ENCODE measurements at regions of chr6 and their contacts with region 1.

Region 1: GRCh38 chr6:157379656-157380454 is 1.1 kb upstream of the ZDHHC14 start:
- DNase-seq: peak; percentile 85
- ATAC-seq: peak; percentile 73
- H3K4me3 ChIP-seq: peak overlapping the region; percentile 96
- H3K27ac ChIP-seq: no peak overlapping the region
- H3K4me1 ChIP-seq: peaks cover 11% of the 10 kb centered on the region; the same call in 1 of the 2 replicates
- H3K27me3 ChIP-seq: no peaks in the 10 kb centered on the region
- CTCF ChIP-seq: no peak

Region 2: GRCh38 chr6:157089258-157089657 is 290.6 kb before region 1 on chr6:
- CTCF ChIA-PET with region 1: no interaction called
- POLR2A ChIA-PET with region 1: no interaction called
- intact Hi-C with region 1: no loop called
- DNase-seq: no peak
- ATAC-seq: no peak
- H3K4me3 ChIP-seq: no peak overlapping the region
- H3K27ac ChIP-seq: no peak overlapping the region
- H3K4me1 ChIP-seq: no peaks in the 10 kb centered on the region
- H3K27me3 ChIP-seq: no peaks in the 10 kb centered on the region
- CTCF ChIP-seq: no peak

Region 3: DNA sequence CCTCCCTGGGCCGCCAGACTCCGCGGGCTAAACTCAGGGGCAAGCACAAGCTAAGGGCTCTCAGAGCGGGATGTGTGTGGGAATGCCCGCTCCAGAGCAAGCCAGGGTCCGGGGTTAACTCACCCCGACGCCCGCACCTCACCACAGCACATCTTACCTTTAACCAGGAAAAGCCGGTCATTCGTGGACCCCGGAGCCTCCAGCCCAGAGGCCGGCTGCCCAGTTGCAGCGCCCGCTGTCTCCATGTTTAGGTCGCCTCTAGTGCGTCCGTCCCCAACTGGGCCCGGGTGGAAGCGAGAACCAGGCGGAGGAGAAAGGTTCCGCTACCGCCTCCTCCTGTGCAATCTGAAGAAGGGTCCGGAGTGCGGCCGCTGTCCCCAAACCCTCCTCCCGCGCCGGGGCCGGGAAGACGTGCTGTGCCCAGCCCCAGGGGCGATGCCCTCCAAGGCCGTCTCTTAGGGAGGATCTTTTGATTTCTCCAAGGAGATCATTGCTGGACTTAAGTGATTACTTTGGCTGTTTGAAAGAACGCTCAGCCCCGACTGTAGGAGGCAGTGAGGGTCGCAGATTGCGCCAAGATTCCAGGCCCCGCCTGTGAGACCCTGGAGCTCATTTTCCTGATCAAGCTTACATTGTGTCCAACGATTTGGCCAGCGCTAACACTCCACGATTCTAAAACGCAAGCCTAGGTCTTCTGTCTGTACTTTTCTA is 56.4 kb before region 1 on chr6 and contains the start of gene TMEM242:
- CTCF ChIA-PET with region 1: no interaction called
- POLR2A ChIA-PET with region 1: no interaction called
- intact Hi-C with region 1: loop called (anchors 2 kb)
- DNase-seq: peak; percentile 91
- ATAC-seq: peak; percentile 79
- H3K4me3 ChIP-seq: peak within 1 kb of the TSS; percentile 85
- H3K27ac ChIP-seq: peak within 1 kb of the TSS; percentile 56
- H3K4me1 ChIP-seq: peaks cover 12% of the 10 kb centered on the region
- H3K27me3 ChIP-seq: no peaks in the 10 kb centered on the region
- CTCF ChIP-seq: no peak
- total RNA-seq, gene TMEM242: 7.9 and 10.3 TPM in 2 replicates

Region 4: DNA sequence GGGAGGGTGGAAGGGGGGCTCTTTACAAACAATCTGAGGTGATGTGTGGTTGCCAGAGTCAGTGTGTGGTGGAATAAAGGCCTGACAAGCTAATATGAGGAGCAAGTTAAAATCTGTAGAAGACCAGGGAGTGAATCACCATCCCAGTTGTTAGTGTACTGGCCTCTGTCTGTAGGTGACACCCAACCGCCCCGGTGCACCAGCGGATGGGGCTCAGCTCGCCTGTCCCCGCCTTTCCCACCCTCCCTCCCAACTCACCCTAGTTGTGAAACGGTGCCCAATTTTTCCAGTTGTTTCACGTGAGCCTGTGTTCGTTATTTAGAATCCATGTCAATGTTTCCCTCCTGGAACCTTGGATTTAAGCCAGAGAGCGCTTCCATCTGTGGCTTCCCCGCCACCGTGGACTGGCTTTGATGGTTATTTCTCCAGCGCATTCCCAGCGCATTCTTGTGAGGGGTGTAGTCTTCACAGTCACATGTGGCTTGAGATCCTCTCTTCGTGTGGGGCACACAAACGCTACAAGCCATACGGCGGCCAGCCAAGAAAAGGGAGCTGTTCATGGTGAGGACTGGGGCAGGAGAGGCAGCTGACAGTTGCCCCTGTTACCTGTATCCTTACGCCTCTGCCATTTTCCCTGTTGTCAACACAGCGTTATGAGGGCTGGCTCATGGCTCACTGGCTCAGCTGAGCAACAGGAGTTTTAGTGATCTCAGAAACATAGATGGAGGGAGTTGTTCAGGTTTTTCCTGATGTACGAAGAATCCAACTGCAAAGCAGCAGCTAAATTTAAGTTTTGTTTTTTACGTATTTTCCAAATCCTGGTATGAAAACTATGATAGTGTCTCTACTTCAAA is 138.8 kb after region 1 on chr6:
- CTCF ChIA-PET with region 1: no interaction called
- POLR2A ChIA-PET with region 1: no interaction called
- intact Hi-C with region 1: no loop called
- DNase-seq: no peak
- ATAC-seq: no peak
- H3K4me3 ChIP-seq: no peak overlapping the region
- H3K27ac ChIP-seq: no peak overlapping the region
- H3K4me1 ChIP-seq: peaks cover 8% of the 10 kb centered on the region
- H3K27me3 ChIP-seq: no peaks in the 10 kb centered on the region
- CTCF ChIP-seq: no peak

Region 5: DNA sequence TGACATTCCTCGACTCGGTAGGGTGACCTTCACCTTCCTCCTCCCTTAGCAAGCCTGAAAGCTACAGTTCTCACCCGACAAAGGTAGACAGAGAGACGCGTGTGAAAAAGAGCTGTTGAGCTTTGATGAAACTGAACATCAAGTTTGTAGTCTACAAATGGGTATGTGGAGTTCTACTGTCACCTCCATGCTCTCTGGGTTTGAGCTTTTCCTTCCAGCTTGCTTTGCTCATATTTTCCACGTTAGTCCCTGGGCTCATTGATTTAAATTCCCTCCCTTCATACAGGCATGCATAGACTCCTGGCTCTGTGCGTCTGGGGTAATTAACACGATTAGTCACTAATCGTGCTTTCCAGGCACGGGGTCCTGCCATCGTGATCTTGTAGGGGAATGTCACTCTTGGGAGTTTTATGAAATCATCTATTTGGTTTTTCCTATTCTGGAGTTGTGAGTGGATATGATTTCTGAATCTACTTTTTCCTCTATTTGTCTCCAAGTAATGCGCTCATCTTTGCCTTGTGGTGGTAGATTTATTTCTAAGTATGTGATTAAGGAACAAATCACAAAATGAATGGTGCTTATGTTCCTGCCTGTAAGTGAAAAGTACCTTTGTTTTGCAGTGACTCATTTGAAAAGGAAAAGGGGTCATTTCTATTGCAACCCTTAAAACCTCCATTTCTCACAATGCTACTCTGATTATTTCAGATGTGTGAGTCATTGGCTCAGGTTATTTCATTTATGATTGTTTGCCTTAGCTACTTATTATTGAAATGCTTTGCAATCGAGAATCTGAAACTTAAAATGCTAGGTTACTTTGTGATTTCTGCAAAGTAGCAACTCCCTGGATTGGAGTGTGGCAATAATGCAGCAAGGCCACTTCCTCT is 155.7 kb after region 1 on chr6:
- CTCF ChIA-PET with region 1: no interaction called
- POLR2A ChIA-PET with region 1: no interaction called
- intact Hi-C with region 1: loop called (anchors 5 kb)
- DNase-seq: peak; percentile 81
- ATAC-seq: peak; percentile 94
- H3K4me3 ChIP-seq: peak overlapping the region; percentile 34; the same call in 1 of the 2 replicates
- H3K27ac ChIP-seq: peak overlapping the region; percentile 83
- H3K4me1 ChIP-seq: peaks cover 17% of the 10 kb centered on the region
- H3K27me3 ChIP-seq: no peaks in the 10 kb centered on the region
- CTCF ChIP-seq: no peak

Region 6: GRCh38 chr6:157579467-157580031 is 199.7 kb after region 1 on chr6:
- CTCF ChIA-PET with region 1: no interaction called
- POLR2A ChIA-PET with region 1: no interaction called
- intact Hi-C with region 1: loop called (anchors 1 kb)
- DNase-seq: peak; percentile 52
- ATAC-seq: peak; percentile 84
- H3K4me3 ChIP-seq: no peak overlapping the region
- H3K27ac ChIP-seq: peak overlapping the region; percentile 56; the same call in 1 of the 2 replicates
- H3K4me1 ChIP-seq: peaks cover 10% of the 10 kb centered on the region
- H3K27me3 ChIP-seq: no peaks in the 10 kb centered on the region
- CTCF ChIP-seq: no peak

Region 7: GRCh38 chr6:157614026-157614568 is 234.2 kb after region 1 on chr6:
- CTCF ChIA-PET with region 1: no interaction called
- POLR2A ChIA-PET with region 1: interaction called, 6 read pairs
- intact Hi-C with region 1: loop called (anchors 2 kb)
- DNase-seq: peak; percentile 68
- ATAC-seq: peak; percentile 67
- H3K4me3 ChIP-seq: peak overlapping the region; percentile 67; the same call in 1 of the 2 replicates
- H3K27ac ChIP-seq: peak overlapping the region; percentile 99
- H3K4me1 ChIP-seq: peaks cover 38% of the 10 kb centered on the region
- H3K27me3 ChIP-seq: no peaks in the 10 kb centered on the region
- CTCF ChIP-seq: peak; percentile 47

Measured in PC-3 (cell line).